ENCODE measurements at regions of chr12 and their contacts with region 1.

Region 1: DNA sequence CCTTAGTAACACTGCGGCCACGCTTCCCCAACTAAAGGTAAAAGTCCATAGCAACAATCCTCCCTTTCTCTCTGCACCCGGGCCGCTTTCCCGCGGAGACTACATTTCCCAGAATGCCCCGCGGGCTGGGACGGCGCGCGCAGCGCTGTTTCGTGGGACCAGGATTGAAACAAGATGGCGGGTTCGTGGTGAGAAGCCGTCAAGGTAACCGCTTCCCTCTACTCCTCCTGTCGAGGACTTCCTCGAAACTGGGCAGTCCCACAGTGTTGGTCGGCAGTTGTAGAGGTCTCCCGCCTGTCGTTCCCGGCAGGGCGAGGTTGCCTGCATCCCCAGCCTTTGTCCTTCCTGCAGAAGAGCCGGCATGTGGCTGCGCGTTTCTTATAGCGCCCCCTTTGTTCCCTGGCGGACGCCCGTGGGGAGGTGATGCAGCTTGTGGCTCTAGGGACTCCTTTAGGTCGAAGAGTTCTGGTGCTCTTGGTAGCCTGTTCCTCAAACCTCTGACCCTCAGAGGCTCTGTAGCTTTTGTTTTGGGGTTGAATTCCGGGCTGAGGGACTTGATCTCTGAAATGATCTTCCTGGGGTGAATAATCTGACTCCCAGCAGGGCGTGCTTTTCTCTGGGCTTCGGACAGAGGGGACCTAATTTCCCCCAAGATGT is at the start of gene MRPL42:
- DNase-seq: peak; percentile 85
- ATAC-seq: peak; percentile 94
- H3K4me3 ChIP-seq: peak within 1 kb of the TSS; percentile 78 to 92 (median 88)
- H3K27ac ChIP-seq: peak within 1 kb of the TSS; percentile 95
- H3K4me1 ChIP-seq: peaks cover 74% of the 10 kb centered on the region
- H3K27me3 ChIP-seq: no peaks in the 10 kb centered on the region; a peak in 1 of 5 replicates
- CTCF ChIP-seq: peak; percentile 95
- EP300 ChIP-seq: no peak
- POLR2A ChIP-seq: peak; percentile 88 to 90
- RAD21 ChIP-seq: peak; percentile 48; the same call in 1 of the 2 replicates
- total RNA-seq, gene MRPL42: 148 and 224 TPM in 2 replicates

Region 2: DNA sequence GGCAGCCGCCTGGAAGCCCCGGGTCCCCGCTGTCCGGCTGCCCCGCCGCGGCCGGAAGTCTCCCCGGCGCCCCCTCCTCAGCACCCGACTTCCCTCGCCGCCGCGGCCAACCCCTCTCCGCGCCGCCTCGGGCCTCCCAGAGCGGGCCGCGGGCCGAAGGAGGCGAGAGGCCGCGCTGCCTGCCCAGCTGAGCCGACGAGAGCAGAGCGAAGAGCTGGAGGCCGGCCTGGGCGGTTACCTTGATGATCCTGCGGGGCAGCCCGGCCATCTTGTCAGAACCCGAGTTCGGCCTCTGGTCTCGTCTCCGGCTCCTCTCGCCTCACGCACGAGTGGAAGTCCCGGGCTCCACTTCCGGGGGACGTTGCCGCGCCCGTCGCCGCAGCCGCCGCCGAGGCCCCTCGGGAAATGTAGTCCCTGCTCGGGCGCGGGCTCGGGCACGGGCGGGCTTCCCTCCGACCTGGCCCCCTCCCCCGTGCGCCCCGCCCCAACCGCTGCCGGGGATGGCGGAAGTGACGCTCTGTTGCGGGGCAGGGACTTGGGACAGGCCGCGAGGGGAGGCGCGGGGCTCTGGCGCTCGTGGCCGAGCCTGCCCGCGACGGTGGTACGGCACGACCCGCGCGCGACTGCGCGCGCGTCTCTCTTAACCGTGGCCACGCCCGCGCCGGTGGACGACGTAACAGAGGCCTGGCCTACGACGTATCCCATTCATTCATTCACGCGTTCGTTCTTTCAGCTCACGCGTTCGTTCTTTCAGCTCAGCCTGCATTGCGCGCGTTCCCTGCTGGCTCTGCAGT is 25.7 kb before region 1 on chr12 and contains the start of gene UBE2N:
- CTCF ChIA-PET with region 1: no interaction called
- POLR2A ChIA-PET with region 1: interaction called, 8 read pairs
- in situ Hi-C with region 1: no loop called
- intact Hi-C with region 1: loop called (anchors 1 kb)
- DNase-seq: peak; percentile 91
- ATAC-seq: peak; percentile 94
- H3K4me3 ChIP-seq: peak within 1 kb of the TSS; percentile 70 to 95 (median 76)
- H3K27ac ChIP-seq: peak within 1 kb of the TSS; percentile 92
- H3K4me1 ChIP-seq: peaks cover 55% of the 10 kb centered on the region
- H3K27me3 ChIP-seq: no peaks in the 10 kb centered on the region; a peak in 1 of 5 replicates
- CTCF ChIP-seq: 0 out of 2 replicates have a peak, but pooled peaks have one; percentile 4
- EP300 ChIP-seq: peak in 1 of 2 experiments; percentile 18; a peak in 2 of 4 replicates
- POLR2A ChIP-seq: peak; percentile 86
- RAD21 ChIP-seq: peak; percentile 24
- total RNA-seq, gene UBE2N: 197 and 317 TPM in 2 replicates

Measured in HepG2 (cell line).